ENCODE measurements at regions of chr4 and their contacts with region 1.

Region 1: GRCh38 chr4:55546756-55547465 is at the start of gene CLOCK:
- DNase-seq: peak; percentile 94
- ATAC-seq: peak; percentile 75
- H3K4me3 ChIP-seq: peak within 1 kb of the TSS; percentile 67 to 95 (median 79)
- H3K4me3 Mint-ChIP-seq: peak within 1 kb of the TSS; percentile 97
- H3K27ac ChIP-seq: peak within 1 kb of the TSS; percentile 59 to 84
- H3K27ac Mint-ChIP-seq: peak within 1 kb of the TSS; percentile 96
- H3K4me1 ChIP-seq: peaks cover 6 to 9% of the 10 kb centered on the region in 2 donors
- H3K4me1 Mint-ChIP-seq: peaks cover 31% of the 10 kb centered on the region
- H3K27me3 ChIP-seq: no peaks in the 10 kb centered on the region
- H3K27me3 Mint-ChIP-seq: peaks cover 6% of the 10 kb centered on the region
- CTCF ChIP-seq: peak; percentile 58
- total RNA-seq, gene CLOCK: 14.2 and 15.2 TPM in 2 replicates

Region 2: GRCh38 chr4:55008166-55009070 is 538.5 kb before region 1 on chr4:
- CTCF ChIA-PET with region 1: no interaction called
- POLR2A ChIA-PET with region 1: no interaction called
- intact Hi-C with region 1: no loop called
- DNase-seq: no peak
- ATAC-seq: no peak
- H3K4me3 ChIP-seq: no peak overlapping the region
- H3K4me3 Mint-ChIP-seq: no peak overlapping the region
- H3K27ac ChIP-seq: no peak overlapping the region
- H3K27ac Mint-ChIP-seq: no peak overlapping the region
- H3K4me1 ChIP-seq: no peaks in the 10 kb centered on the region
- H3K4me1 Mint-ChIP-seq: no peaks in the 10 kb centered on the region
- H3K27me3 ChIP-seq: no peaks in the 10 kb centered on the region
- H3K27me3 Mint-ChIP-seq: no peaks in the 10 kb centered on the region
- CTCF ChIP-seq: no peak

Region 3: GRCh38 chr4:55395529-55396307 is 151.2 kb before region 1 on chr4 and contains the start of gene TMEM165:
- CTCF ChIA-PET with region 1: interaction called, 4 read pairs
- POLR2A ChIA-PET with region 1: interaction called, 8 read pairs
- intact Hi-C with region 1: loop called (anchors 1 kb)
- DNase-seq: peak; percentile 94
- ATAC-seq: peak; percentile 91
- H3K4me3 ChIP-seq: peak within 1 kb of the TSS; percentile 67 to 94 (median 77)
- H3K4me3 Mint-ChIP-seq: peak within 1 kb of the TSS; percentile 97
- H3K27ac ChIP-seq: peak within 1 kb of the TSS; percentile 91 to 93
- H3K27ac Mint-ChIP-seq: peak within 1 kb of the TSS; percentile 97
- H3K4me1 ChIP-seq: peaks cover 28 to 33% of the 10 kb centered on the region in 2 donors
- H3K4me1 Mint-ChIP-seq: peaks cover 39% of the 10 kb centered on the region
- H3K27me3 ChIP-seq: no peaks in the 10 kb centered on the region
- H3K27me3 Mint-ChIP-seq: no peaks in the 10 kb centered on the region
- CTCF ChIP-seq: no peak
- total RNA-seq, gene TMEM165: 110 and 113 TPM in 2 replicates

Region 4: DNA sequence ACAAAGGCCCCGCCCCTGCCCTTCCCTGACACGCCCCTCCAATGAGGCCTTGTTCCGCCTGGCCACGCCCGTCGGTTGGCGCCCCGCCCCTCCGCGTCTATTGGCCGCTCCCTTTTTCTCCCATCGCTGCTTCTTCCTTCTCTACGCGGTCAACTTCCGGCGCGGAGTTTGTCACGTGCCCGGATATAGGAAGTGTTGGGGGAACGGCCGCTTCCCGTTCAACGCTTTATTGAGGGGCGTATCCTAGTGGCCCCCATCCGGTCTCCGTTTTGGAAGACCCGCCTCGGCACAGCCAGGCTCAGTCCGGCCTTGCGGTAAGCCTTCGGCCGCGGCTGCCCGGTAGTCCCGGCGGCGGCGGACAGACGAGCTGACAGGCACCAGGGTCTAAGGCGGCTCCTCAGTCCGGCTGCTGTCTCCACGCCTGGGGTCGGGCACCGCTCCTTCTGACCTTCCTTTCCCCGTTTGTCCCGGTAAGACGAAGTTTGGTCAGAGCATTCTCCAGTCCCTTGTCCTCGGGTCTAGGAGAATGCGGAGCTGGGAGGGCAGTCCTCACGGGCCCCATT is 306.7 kb after region 1 on chr4 and contains the start of gene EXOC1:
- CTCF ChIA-PET with region 1: interaction called, 3 read pairs
- POLR2A ChIA-PET with region 1: interaction called, 3 read pairs
- intact Hi-C with region 1: loop called (anchors 1 kb)
- DNase-seq: peak; percentile 97
- ATAC-seq: peak; percentile 100
- H3K4me3 ChIP-seq: peak within 1 kb of the TSS; percentile 85 to 98 (median 97)
- H3K4me3 Mint-ChIP-seq: no peak within 1 kb of the TSS
- H3K27ac ChIP-seq: peak within 1 kb of the TSS; percentile 71 to 86
- H3K27ac Mint-ChIP-seq: peak within 1 kb of the TSS; percentile 94
- H3K4me1 ChIP-seq: peaks cover 11 to 12% of the 10 kb centered on the region in 2 donors
- H3K4me1 Mint-ChIP-seq: peaks cover 13% of the 10 kb centered on the region
- H3K27me3 ChIP-seq: peaks cover 0 to 14% (median 2%) of the 10 kb centered on the region in 4 experiments
- H3K27me3 Mint-ChIP-seq: peaks cover 12% of the 10 kb centered on the region
- CTCF ChIP-seq: no peak
- total RNA-seq, gene EXOC1: 42.5 and 46.7 TPM in 2 replicates

Region 5: GRCh38 chr4:56435306-56435926 is 888.5 kb after region 1 on chr4 and contains the start of gene PPAT:
- CTCF ChIA-PET with region 1: no interaction called
- POLR2A ChIA-PET with region 1: interaction called, 14 read pairs
- intact Hi-C with region 1: no loop called
- DNase-seq: peak; percentile 99
- ATAC-seq: peak; percentile 84
- H3K4me3 ChIP-seq: peak within 1 kb of the TSS; percentile 82 to 97 (median 92)
- H3K4me3 Mint-ChIP-seq: peak within 1 kb of the TSS; percentile 96
- H3K27ac ChIP-seq: peak within 1 kb of the TSS; percentile 77 to 83
- H3K27ac Mint-ChIP-seq: peak within 1 kb of the TSS; percentile 99
- H3K4me1 ChIP-seq: peaks cover 16 to 22% of the 10 kb centered on the region in 2 donors
- H3K4me1 Mint-ChIP-seq: peaks cover 29% of the 10 kb centered on the region
- H3K27me3 ChIP-seq: no peaks in the 10 kb centered on the region
- H3K27me3 Mint-ChIP-seq: no peaks in the 10 kb centered on the region
- CTCF ChIP-seq: peak; percentile 19
- total RNA-seq, gene PPAT: 6.7 and 9.2 TPM in 2 replicates

Region 6: GRCh38 chr4:56977321-56978012 is 1430.6 kb after region 1 on chr4 and contains the start of gene NOA1:
- CTCF ChIA-PET with region 1: no interaction called
- POLR2A ChIA-PET with region 1: no interaction called
- intact Hi-C with region 1: loop called (anchors 2 kb)
- DNase-seq: peak; percentile 99
- ATAC-seq: peak; percentile 82
- H3K4me3 ChIP-seq: peak within 1 kb of the TSS; percentile 74 to 95 (median 91)
- H3K4me3 Mint-ChIP-seq: peak within 1 kb of the TSS; percentile 100
- H3K27ac ChIP-seq: peak within 1 kb of the TSS; percentile 73 to 84
- H3K27ac Mint-ChIP-seq: peak within 1 kb of the TSS; percentile 98
- H3K4me1 ChIP-seq: peaks cover 35 to 40% of the 10 kb centered on the region in 2 donors
- H3K4me1 Mint-ChIP-seq: peaks cover 57% of the 10 kb centered on the region
- H3K27me3 ChIP-seq: no peaks in the 10 kb centered on the region
- H3K27me3 Mint-ChIP-seq: no peaks in the 10 kb centered on the region
- CTCF ChIP-seq: no peak
- total RNA-seq, gene NOA1: 22.7 and 24.0 TPM in 2 replicates

Measured in B cell (primary cell).